Caco-2 (cell line): ENCODE measurements at regions of chr9 and their contacts with region 1.

Region 1: GRCh38 chr9:111013250-111013649 is 25.0 kb downstream of the LPAR1 start:
- DNase-seq: peak in 1 of 2 experiments; percentile 9
- H3K4me3 ChIP-seq: no peak overlapping the region
- H3K4me3 Mint-ChIP-seq: no peak overlapping the region
- H3K27ac Mint-ChIP-seq: peak overlapping the region; percentile 46
- H3K4me1 ChIP-seq: peaks cover 24% of the 10 kb centered on the region
- H3K4me1 Mint-ChIP-seq: peaks cover 6% of the 10 kb centered on the region
- H3K27me3 ChIP-seq: no peaks in the 10 kb centered on the region
- H3K27me3 Mint-ChIP-seq: no peaks in the 10 kb centered on the region
- CTCF ChIP-seq: no peak

Region 2: DNA sequence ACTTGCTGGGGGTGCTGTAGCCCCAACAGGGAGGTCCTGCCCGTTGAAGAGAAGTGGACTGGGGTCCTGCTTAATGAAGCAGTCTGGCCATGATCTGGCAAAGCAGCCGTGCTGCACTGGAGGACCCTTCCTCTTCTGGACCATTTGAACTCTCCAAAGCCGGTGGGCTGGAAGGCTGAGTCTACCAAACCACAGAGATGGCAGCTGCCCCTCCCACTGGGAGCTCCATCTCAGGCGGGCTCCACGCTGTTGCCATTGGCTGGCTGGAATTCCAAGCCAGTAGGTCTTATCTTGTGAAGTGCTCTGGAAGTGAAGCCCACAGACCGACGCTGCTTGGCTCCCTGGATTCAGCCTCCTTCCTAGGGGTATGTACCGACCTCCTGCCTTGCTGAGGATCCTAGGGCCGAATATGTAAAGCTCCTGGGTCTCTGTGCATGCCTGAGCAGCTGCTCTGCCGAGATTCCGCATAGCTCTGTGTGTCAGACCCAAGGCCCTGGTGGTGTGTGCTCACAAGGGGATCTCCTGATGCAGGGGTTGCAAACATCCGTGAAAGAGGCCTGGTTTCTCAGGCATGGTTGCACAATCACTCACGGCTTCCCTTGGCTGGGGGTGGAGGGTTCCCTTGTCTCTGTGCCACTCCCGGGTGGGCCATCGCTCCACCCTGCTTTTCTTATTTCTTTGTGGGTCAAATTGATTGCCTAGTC is 413.9 kb before region 1 on chr9:
- CTCF ChIA-PET with region 1: no interaction called
- POLR2A ChIA-PET with region 1: no interaction called
- intact Hi-C with region 1: no loop called
- DNase-seq: no peak
- H3K4me3 ChIP-seq: no peak overlapping the region
- H3K4me3 Mint-ChIP-seq: no peak overlapping the region
- H3K27ac Mint-ChIP-seq: no peak overlapping the region
- H3K4me1 ChIP-seq: 0 out of 2 replicates have a peak, but pooled peaks cover 5% of the 10 kb centered on the region
- H3K4me1 Mint-ChIP-seq: no peaks in the 10 kb centered on the region
- H3K27me3 ChIP-seq: no peaks in the 10 kb centered on the region
- H3K27me3 Mint-ChIP-seq: no peaks in the 10 kb centered on the region
- CTCF ChIP-seq: no peak

Region 3: GRCh38 chr9:110911659-110912418 is 101.4 kb before region 1 on chr9:
- CTCF ChIA-PET with region 1: no interaction called
- POLR2A ChIA-PET with region 1: no interaction called
- intact Hi-C with region 1: no loop called
- DNase-seq: peak in 1 of 2 experiments; percentile 35
- H3K4me3 ChIP-seq: no peak overlapping the region
- H3K4me3 Mint-ChIP-seq: peak overlapping the region; percentile 59
- H3K27ac Mint-ChIP-seq: peak overlapping the region; percentile 68
- H3K4me1 ChIP-seq: peaks cover 32% of the 10 kb centered on the region
- H3K4me1 Mint-ChIP-seq: peaks cover 34% of the 10 kb centered on the region
- H3K27me3 ChIP-seq: no peaks in the 10 kb centered on the region
- H3K27me3 Mint-ChIP-seq: no peaks in the 10 kb centered on the region
- CTCF ChIP-seq: no peak

Region 4: GRCh38 chr9:110996436-110997220 is 16.6 kb before region 1 on chr9:
- CTCF ChIA-PET with region 1: no interaction called
- POLR2A ChIA-PET with region 1: no interaction called
- intact Hi-C with region 1: loop called (anchors 1 kb)
- DNase-seq: no peak
- H3K4me3 ChIP-seq: no peak overlapping the region
- H3K4me3 Mint-ChIP-seq: no peak overlapping the region
- H3K27ac Mint-ChIP-seq: no peak overlapping the region
- H3K4me1 ChIP-seq: peaks cover 6% of the 10 kb centered on the region
- H3K4me1 Mint-ChIP-seq: peaks cover 7% of the 10 kb centered on the region
- H3K27me3 ChIP-seq: no peaks in the 10 kb centered on the region
- H3K27me3 Mint-ChIP-seq: no peaks in the 10 kb centered on the region
- CTCF ChIP-seq: no peak

Region 5: DNA sequence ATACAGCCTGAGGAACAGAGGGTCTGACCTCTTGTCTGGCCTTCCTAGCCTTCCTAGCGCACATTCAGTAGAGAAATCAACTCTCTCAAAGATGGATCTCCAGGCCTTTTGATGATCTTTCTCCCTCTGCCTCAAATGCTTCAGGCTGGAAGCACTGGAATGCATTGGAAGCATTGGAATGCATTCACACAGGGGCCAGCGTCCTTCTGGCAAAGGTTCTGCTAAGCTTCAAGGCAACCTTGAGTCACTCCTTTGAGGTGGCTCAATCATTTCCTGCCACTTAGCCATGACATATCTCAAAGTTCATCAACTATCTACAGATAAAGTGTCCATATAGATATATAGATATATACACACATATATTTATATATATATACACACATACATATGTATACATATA is 273.9 kb after region 1 on chr9:
- CTCF ChIA-PET with region 1: no interaction called
- POLR2A ChIA-PET with region 1: no interaction called
- intact Hi-C with region 1: no loop called
- DNase-seq: peak; percentile 10 to 56
- H3K4me3 ChIP-seq: no peak overlapping the region
- H3K4me3 Mint-ChIP-seq: no peak overlapping the region
- H3K27ac Mint-ChIP-seq: no peak overlapping the region
- H3K4me1 ChIP-seq: no peaks in the 10 kb centered on the region
- H3K4me1 Mint-ChIP-seq: peaks cover 6% of the 10 kb centered on the region
- H3K27me3 ChIP-seq: no peaks in the 10 kb centered on the region
- H3K27me3 Mint-ChIP-seq: peaks cover 5% of the 10 kb centered on the region
- CTCF ChIP-seq: no peak